ENCODE measurements at regions of chr1 and their contacts with region 1.

Region 1: GRCh38 chr1:156659994-156660751 is 17.0 kb downstream of the NES start:
- DNase-seq: peak; percentile 97 to 98 (median 98)
- ATAC-seq: peak; percentile 81 to 88 (median 83)
- H3K4me3 ChIP-seq: peak overlapping the region in 10 of 12 donors; percentile 19 to 46 (median 42)
- H3K27ac ChIP-seq: peak overlapping the region; percentile 53 to 99 (median 96)
- H3K4me1 ChIP-seq: peaks cover 26 to 82% (median 69%) of the 10 kb centered on the region in 12 donors
- H3K27me3 ChIP-seq: peaks cover 0 to 21% (median 0%) of the 10 kb centered on the region in 9 donors
- CTCF ChIP-seq: peak; percentile 94 to 100 (median 98)
- POLR2A ChIP-seq: peak in 1 of 2 donors; percentile 33

Region 2: GRCh38 chr1:156114101-156114916 is 545.9 kb before region 1 on chr1 and contains the start of gene LMNA:
- intact Hi-C with region 1: loop called in 1 of 10 experiments (anchors 10 kb)
- DNase-seq: peak; percentile 91 to 94 (median 93)
- ATAC-seq: peak; percentile 75 to 90 (median 85)
- H3K4me3 ChIP-seq: peak within 1 kb of the TSS; percentile 78 to 100 (median 91)
- H3K27ac ChIP-seq: peak within 1 kb of the TSS; percentile 81 to 99 (median 98)
- H3K4me1 ChIP-seq: peaks cover 11 to 48% (median 35%) of the 10 kb centered on the region in 12 donors
- H3K27me3 ChIP-seq: no peaks in the 10 kb centered on the region
- CTCF ChIP-seq: no peak
- POLR2A ChIP-seq: peak; percentile 90 to 99
- total RNA-seq, gene LMNA: 223 to 396 (median 279) TPM

Region 3: GRCh38 chr1:156456622-156457465 is 203.3 kb before region 1 on chr1:
- intact Hi-C with region 1: loop called in 2 of 10 experiments (anchors 2 to 5 kb)
- DNase-seq: peak; percentile 97 to 99 (median 98)
- ATAC-seq: peak; percentile 94 to 96 (median 95)
- H3K4me3 ChIP-seq: peak overlapping the region; percentile 42 to 73 (median 62)
- H3K27ac ChIP-seq: peak overlapping the region; percentile 98 to 100 (median 98)
- H3K4me1 ChIP-seq: peaks cover 0 to 30% (median 6%) of the 10 kb centered on the region in 12 donors
- H3K27me3 ChIP-seq: no peaks in the 10 kb centered on the region
- CTCF ChIP-seq: no peak
- POLR2A ChIP-seq: peak; percentile 35 to 71

Region 4: DNA sequence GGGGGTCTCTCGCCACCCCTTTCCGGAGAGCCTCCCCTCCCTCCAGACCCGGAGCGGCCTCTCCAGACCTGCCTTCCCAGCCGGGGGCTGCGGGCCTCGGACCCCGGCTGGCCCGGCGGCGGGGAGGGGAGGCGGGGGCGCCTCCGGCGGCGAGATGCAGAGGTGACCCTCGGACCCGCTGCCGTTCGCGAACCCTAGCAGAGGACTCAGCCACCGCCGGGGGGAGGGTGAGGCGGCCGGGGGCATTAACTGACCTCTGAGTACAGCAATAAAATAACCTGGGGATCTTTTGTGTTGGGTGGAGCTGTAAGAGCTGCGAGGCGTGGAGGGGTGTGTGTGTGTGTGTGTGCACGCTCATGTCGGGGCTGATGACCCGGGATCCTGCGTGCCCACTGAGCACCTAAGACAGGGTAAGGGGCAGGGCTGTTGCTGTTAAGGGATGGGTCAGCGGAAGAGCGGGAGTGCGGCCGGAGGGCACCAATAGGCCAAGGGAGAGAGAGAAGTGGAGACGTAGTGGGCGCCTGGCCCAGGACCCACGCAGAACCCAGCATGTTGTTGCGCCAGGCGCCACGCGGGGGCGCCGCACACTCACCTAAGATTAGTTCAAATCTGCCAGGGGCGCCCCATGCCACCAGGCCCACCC is 34.6 kb before region 1 on chr1:
- intact Hi-C with region 1: loop called (anchors 1 to 2 kb)
- DNase-seq: peak in 4 of 5 donors; percentile 46 to 81 (median 64)
- ATAC-seq: peak; percentile 40 to 67 (median 48)
- H3K4me3 ChIP-seq: peak overlapping the region; percentile 26 to 59 (median 50)
- H3K27ac ChIP-seq: peak overlapping the region in 9 of 12 donors; percentile 14 to 81 (median 67)
- H3K4me1 ChIP-seq: peaks cover 5 to 36% (median 22%) of the 10 kb centered on the region in 12 donors
- H3K27me3 ChIP-seq: peaks cover 3 to 67% (median 50%) of the 10 kb centered on the region in 9 donors
- CTCF ChIP-seq: peak; percentile 62 to 85 (median 80)
- POLR2A ChIP-seq: no peak

Region 5: GRCh38 chr1:156705918-156706656 is 45.9 kb after region 1 on chr1:
- intact Hi-C with region 1: loop called in 1 of 10 experiments (anchors 1 kb)
- DNase-seq: peak; percentile 51 to 75 (median 65)
- ATAC-seq: peak; percentile 23 to 71 (median 46)
- H3K4me3 ChIP-seq: peak overlapping the region; percentile 12 to 68 (median 46)
- H3K27ac ChIP-seq: peak overlapping the region in 11 of 12 donors; percentile 41 to 91 (median 71)
- H3K4me1 ChIP-seq: peaks cover 0 to 57% (median 36%) of the 10 kb centered on the region in 12 donors
- H3K27me3 ChIP-seq: peaks cover 0 to 45% (median 28%) of the 10 kb centered on the region in 9 donors
- CTCF ChIP-seq: peak; percentile 68 to 88 (median 78)
- POLR2A ChIP-seq: no peak

Region 6: GRCh38 chr1:156833603-156834002 is 173.4 kb after region 1 on chr1:
- intact Hi-C with region 1: no loop called
- DNase-seq: peak in 1 of 5 donors; percentile 42
- ATAC-seq: peak in 2 of 4 donors; percentile 45 to 49
- H3K4me3 ChIP-seq: no peak overlapping the region
- H3K27ac ChIP-seq: no peak overlapping the region
- H3K4me1 ChIP-seq: peaks cover 0 to 5% (median 0%) of the 10 kb centered on the region in 12 donors
- H3K27me3 ChIP-seq: peaks cover 0 to 14% (median 2%) of the 10 kb centered on the region in 9 donors
- CTCF ChIP-seq: no peak
- POLR2A ChIP-seq: no peak

Measured in heart left ventricle (tissue), 16 donors.